PC-9 (cell line): ENCODE measurements at regions of chr1 and their contacts with region 1.

Region 1: GRCh38 chr1:40709100-40709801 is 17.7 kb downstream of the NFYC start:
- DNase-seq: peak; percentile 82 to 94
- H3K4me3 ChIP-seq: peak overlapping the region; percentile 62
- H3K27ac ChIP-seq: peak overlapping the region; percentile 21
- H3K4me1 ChIP-seq: peaks cover 43% of the 10 kb centered on the region
- H3K27me3 ChIP-seq: no peaks in the 10 kb centered on the region
- CTCF ChIP-seq: no peak

Region 2: DNA sequence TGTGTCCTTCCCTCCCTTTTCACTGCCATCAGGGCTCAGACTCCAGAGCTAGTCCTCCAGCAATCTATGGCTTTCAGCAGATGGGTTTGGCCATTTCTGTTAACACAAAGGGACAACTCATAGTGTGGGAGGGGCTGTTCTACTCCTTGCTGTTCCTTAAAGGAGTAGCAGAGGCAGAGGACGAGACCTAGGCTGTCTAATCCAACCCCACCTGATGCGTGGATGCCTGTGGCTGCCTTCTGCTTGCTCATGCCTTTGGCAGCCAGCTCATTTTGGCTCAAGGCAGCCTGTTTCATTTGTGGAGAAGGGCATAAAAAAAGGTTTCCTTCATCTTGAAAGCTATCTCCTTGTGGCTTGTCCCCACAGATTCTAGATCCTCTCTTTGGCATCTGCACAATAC is 727.3 kb before region 1 on chr1:
- CTCF ChIA-PET with region 1: no interaction called
- POLR2A ChIA-PET with region 1: interaction called, 10 read pairs
- intact Hi-C with region 1: no loop called
- DNase-seq: peak; percentile 90 to 93
- H3K4me3 ChIP-seq: no peak overlapping the region
- H3K27ac ChIP-seq: peak overlapping the region; percentile 65
- H3K4me1 ChIP-seq: peaks cover 36% of the 10 kb centered on the region
- H3K27me3 ChIP-seq: no peaks in the 10 kb centered on the region
- CTCF ChIP-seq: no peak

Region 3: DNA sequence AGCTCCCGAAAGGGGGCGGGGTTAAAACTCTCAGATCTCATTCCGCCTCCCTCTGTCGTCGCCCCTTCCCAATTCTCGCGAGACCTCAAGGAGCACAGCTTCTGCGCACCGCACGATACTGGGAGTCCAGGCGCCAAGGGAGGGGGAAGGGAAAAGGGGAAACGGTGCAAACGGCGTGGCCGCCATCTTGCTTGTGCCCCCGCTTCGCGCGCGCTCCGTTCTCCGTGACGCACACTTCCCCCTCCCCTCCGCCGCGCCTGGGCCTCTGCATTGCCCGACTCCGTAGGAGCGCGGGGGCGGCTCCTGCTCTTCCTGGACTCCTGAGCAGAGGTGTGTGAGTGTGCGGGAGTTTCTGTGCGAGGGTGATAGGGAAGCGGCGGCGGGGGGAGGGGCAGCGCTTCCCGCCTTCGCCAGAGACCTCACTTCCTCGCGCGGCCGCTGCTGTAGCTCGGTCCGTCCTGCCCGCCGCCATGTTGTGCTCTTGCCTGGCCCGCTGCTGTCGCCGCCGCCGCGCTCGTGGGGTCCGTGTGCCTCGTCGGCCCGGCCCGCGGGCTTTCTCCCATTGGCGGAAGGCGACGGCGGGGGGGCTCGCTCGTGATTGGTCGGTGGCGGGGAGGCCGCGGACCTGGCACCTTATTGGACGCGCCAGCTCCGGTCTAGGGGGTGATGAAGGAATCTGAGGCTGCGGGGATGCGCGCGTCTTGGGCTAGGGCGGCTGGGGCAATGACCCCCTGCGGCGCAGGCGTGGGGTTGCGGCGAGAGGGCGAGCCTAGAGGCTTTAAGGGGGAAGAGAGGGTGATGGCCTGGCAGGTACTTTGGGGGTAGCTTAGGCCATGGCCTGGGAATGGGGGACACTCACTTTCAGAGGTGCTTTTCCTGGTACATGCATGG is 17.5 kb before region 1 on chr1 and contains the start of gene NFYC:
- CTCF ChIA-PET with region 1: interaction called, 4 read pairs
- POLR2A ChIA-PET with region 1: interaction called, 5 read pairs
- intact Hi-C with region 1: loop called (anchors 1 kb)
- DNase-seq: peak; percentile 96 to 98
- H3K4me3 ChIP-seq: peak within 1 kb of the TSS; percentile 74
- H3K27ac ChIP-seq: peak within 1 kb of the TSS; percentile 95
- H3K4me1 ChIP-seq: peaks cover 22% of the 10 kb centered on the region
- H3K27me3 ChIP-seq: no peaks in the 10 kb centered on the region
- CTCF ChIP-seq: no peak
- total RNA-seq, gene NFYC: 79.4 and 91.1 TPM in 2 replicates

Region 4: DNA sequence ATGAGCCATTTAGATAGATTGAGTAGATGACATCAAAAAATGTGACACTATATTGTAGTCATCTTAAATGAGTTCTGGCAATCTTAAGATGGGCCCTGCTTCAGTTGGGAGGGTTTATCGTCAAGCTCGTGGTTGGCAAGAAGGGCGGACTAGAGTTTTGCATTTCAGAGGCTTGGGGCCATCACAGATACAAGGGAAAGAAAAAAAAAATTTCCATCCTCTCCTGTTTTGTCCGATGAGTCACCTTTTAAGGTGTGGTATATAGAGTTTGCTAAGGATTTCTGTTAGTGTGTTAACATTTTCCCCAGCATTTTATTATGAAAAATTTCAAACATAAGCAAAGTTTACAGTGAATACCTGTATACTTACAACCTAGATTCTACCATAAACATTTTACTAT is 42.6 kb after region 1 on chr1:
- CTCF ChIA-PET with region 1: no interaction called
- POLR2A ChIA-PET with region 1: interaction called, 11 read pairs
- intact Hi-C with region 1: no loop called
- DNase-seq: no peak
- H3K4me3 ChIP-seq: no peak overlapping the region
- H3K27ac ChIP-seq: no peak overlapping the region
- H3K4me1 ChIP-seq: peaks cover 5% of the 10 kb centered on the region; the same call in 1 of the 2 replicates
- H3K27me3 ChIP-seq: no peaks in the 10 kb centered on the region
- CTCF ChIP-seq: no peak

Region 5: GRCh38 chr1:40799351-40799867 is 90.2 kb after region 1 on chr1:
- CTCF ChIA-PET with region 1: no interaction called
- POLR2A ChIA-PET with region 1: no interaction called
- intact Hi-C with region 1: no loop called
- DNase-seq: no peak
- H3K4me3 ChIP-seq: no peak overlapping the region
- H3K27ac ChIP-seq: no peak overlapping the region
- H3K4me1 ChIP-seq: peaks cover 14% of the 10 kb centered on the region
- H3K27me3 ChIP-seq: no peaks in the 10 kb centered on the region
- CTCF ChIP-seq: no peak

Region 6: DNA sequence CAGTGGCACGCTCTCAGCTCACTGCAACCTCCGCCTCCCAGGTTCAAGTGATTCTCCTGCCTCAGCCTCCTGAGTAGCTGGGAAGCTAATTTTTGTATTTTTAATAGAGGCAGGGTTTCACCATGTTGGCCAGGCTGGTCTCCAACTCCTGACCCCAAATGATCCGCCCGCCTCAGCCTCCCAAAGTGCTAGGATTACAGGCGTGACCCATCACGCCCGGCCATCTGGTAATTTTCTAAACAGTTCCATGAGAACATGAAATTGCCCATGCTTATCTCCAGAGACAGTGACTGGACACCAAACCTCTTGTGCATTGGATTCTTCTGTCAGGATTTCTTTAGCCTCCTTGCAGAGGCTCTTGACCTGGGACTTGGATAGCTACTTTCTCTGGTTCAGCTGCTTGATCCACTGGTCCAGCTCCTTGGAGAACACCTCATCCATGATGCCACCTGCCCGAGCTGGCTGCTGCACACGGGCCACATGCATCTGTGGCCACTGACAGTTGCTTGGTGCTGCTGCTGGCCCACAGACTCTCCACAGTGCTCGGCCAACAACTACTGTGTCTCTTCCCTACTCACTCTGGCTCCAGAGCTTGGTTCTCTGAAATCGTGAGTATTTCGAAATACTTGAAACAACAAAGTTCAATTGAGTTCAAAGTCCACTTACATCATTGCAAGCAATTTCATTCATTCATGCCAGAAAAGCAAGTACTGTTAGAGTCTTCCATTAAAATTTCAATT is 230.2 kb after region 1 on chr1:
- CTCF ChIA-PET with region 1: no interaction called
- POLR2A ChIA-PET with region 1: no interaction called
- intact Hi-C with region 1: no loop called
- DNase-seq: no peak
- H3K4me3 ChIP-seq: no peak overlapping the region
- H3K27ac ChIP-seq: no peak overlapping the region
- H3K4me1 ChIP-seq: peaks cover 13% of the 10 kb centered on the region
- H3K27me3 ChIP-seq: no peaks in the 10 kb centered on the region
- CTCF ChIP-seq: no peak